Prostate gland (tissue), 2 donors: ENCODE measurements at regions of chr22 and their contacts with region 1.

Region 1: GRCh38 chr22:27804470-27805297 is 3.1 kb upstream of the MN1 start:
- DNase-seq: peak; percentile 60
- H3K4me3 ChIP-seq: no peak overlapping the region
- H3K27ac ChIP-seq: no peak overlapping the region
- H3K4me1 ChIP-seq: peaks cover 10% of the 10 kb centered on the region
- H3K27me3 ChIP-seq: no peaks in the 10 kb centered on the region
- CTCF ChIP-seq: peak; percentile 28 to 75 (median 65)
- POLR2A ChIP-seq: no peak

Region 2: DNA sequence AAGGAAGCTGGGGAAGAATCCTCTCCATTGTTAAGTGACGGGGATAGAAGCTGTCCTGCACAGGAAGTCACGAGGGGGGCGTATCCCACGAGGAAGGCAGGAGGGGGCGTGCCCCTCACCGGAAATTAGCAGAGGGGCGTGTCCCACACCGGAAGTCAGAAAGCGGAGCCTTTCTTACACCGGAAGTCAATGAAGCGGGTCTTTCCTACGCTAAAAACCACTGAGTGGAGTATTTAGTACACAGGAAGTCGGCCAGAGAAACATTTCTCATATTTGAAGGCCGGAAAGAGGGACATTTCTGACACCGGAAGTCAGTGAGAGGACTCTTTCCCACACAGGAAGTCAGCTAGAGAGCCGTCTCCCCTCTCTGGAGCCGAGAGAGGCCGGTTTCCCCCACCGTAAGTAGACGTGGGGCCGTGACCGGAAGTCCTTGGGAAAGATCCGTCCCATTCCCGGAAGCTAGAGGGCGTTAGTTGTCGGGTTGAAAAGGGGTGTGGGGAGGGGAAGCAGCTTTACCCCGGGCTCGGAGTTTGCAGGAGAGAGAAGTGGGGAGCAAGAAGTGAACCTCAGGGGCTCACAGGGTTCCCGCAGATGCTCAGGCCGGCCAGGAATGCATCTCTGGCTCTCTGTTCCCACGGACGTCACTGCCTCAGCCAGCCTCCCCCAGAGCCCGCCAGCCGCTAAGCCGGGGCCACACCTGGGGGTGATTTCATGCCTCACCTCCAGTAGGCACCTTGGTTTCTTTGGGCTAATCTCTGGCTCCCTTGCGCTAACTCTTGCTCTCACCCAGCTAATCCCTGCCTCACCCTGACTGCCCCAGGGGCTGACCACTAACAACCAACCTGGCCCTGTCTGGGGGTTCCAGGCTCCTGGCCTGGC is 1131.9 kb before region 1 on chr22:
- intact Hi-C with region 1: loop called (anchors 10 kb)
- DNase-seq: peak; percentile 88
- H3K4me3 ChIP-seq: peak overlapping the region; percentile 66 to 69
- H3K27ac ChIP-seq: peak overlapping the region; percentile 89 to 94
- H3K4me1 ChIP-seq: peaks cover 11% of the 10 kb centered on the region
- H3K27me3 ChIP-seq: no peaks in the 10 kb centered on the region
- CTCF ChIP-seq: peak; percentile 26 to 64 (median 57)
- POLR2A ChIP-seq: no peak

Region 3: GRCh38 chr22:26751217-26751616 is 1053.5 kb before region 1 on chr22:
- intact Hi-C with region 1: loop called (anchors 5 kb)
- DNase-seq: no peak
- H3K4me3 ChIP-seq: no peak overlapping the region
- H3K27ac ChIP-seq: no peak overlapping the region
- H3K4me1 ChIP-seq: no peaks in the 10 kb centered on the region
- H3K27me3 ChIP-seq: no peaks in the 10 kb centered on the region
- CTCF ChIP-seq: no peak
- POLR2A ChIP-seq: no peak

Region 4: DNA sequence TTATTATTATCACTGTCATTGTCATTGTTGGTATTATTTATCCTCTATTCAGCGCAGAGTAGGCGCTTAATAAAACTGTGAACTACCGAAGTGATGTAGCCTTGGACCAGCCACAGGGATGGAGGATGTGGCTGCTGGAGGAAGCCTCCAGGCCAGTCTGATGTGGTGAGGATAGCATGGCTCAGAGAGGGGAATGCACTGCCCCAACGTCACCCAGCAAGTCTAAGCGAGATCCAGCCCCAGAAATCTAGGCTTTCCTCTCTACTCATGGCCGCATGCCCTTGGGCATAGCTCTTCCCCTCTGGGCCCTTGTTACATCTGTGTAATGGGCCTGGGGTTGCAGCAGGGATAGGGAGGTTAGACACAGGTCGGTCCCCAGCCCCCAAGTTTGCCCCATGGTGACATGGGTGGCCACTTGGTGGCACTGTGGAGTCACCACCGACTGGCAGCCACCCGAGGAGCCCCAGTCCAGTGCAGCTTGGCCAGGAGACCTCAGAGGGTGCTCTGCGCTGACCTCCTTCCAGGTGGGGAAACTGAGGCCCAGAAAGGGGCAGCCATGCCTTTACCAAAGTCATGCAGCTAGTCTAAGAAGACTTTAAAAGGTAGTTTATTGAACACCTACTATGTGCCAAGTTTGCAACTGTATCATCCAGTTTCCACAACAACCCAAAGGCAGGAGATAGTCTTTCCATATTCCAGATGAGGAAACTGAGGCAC is 398.9 kb before region 1 on chr22:
- intact Hi-C with region 1: loop called (anchors 5 kb)
- DNase-seq: peak; percentile 34
- H3K4me3 ChIP-seq: no peak overlapping the region
- H3K27ac ChIP-seq: no peak overlapping the region
- H3K4me1 ChIP-seq: no peaks in the 10 kb centered on the region
- H3K27me3 ChIP-seq: no peaks in the 10 kb centered on the region
- CTCF ChIP-seq: peak; percentile 44 to 82 (median 77)
- POLR2A ChIP-seq: no peak

Region 5: DNA sequence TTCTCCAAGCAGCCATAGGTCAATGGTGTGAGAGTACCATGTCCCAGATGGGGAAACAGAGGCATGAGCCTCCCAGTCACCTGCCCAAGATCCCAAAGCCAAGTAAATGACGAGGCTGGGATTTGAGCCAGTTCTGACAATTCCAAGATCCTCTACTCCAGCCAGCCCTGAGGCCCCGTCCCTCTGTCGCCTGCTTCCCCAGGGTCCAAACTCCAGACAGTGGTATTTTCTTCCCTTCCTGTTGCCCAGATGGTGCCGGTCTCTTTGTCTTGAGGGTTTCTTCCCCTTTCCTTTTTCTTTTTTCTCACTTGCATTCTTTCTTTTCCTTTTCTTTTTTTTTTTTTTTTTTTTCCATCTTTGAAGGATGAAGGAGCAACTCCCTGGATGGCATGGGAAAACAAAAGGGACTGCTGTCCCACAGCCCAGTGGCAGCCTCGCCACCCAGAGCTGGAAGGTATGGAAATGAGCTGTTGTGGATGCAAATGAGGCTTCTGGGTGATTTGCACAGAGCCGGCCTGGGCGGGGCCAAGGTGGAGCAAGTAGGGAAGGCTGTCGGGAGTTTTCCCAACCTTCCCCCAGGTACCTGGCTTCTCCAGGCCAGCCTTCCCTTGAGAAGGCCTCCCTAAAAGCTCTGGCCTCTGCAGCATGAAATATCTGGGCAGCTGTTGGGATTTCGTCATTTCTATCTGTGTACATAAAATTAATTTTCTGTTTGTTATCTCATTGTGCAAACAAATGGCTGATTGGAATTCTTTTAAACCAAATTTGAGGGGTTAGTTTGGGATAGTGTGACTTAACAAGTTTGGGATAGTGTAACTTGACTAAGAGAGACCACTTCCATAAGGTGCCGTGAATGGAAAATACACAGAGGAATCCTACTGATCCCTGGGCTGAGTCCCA is 149.9 kb before region 1 on chr22:
- intact Hi-C with region 1: loop called (anchors 5 kb)
- DNase-seq: no peak
- H3K4me3 ChIP-seq: no peak overlapping the region
- H3K27ac ChIP-seq: no peak overlapping the region
- H3K4me1 ChIP-seq: no peaks in the 10 kb centered on the region
- H3K27me3 ChIP-seq: no peaks in the 10 kb centered on the region
- CTCF ChIP-seq: no peak
- POLR2A ChIP-seq: no peak

Region 6: GRCh38 chr22:27687984-27688545 is 116.6 kb before region 1 on chr22:
- intact Hi-C with region 1: no loop called
- DNase-seq: no peak
- H3K4me3 ChIP-seq: no peak overlapping the region
- H3K27ac ChIP-seq: no peak overlapping the region
- H3K4me1 ChIP-seq: peaks cover 8% of the 10 kb centered on the region
- H3K27me3 ChIP-seq: no peaks in the 10 kb centered on the region
- CTCF ChIP-seq: no peak
- POLR2A ChIP-seq: no peak